Gastrocnemius medialis (tissue), 4 donors: ENCODE measurements at regions of chr9 and their contacts with region 1.

Region 1: GRCh38 chr9:134163353-134164196 is 789 bp downstream of the RNU6ATAC start:
- DNase-seq: peak; percentile 45 to 60
- ATAC-seq: peak in 1 of 2 donors; percentile 31
- H3K4me3 ChIP-seq: no peak overlapping the region
- H3K27ac ChIP-seq: no peak overlapping the region
- H3K4me1 ChIP-seq: peaks cover 4 to 10% of the 10 kb centered on the region in 2 donors
- H3K27me3 ChIP-seq: no peaks in the 10 kb centered on the region
- CTCF ChIP-seq: peak; percentile 39 to 63 (median 60)
- POLR2A ChIP-seq: no peak

Region 2: DNA sequence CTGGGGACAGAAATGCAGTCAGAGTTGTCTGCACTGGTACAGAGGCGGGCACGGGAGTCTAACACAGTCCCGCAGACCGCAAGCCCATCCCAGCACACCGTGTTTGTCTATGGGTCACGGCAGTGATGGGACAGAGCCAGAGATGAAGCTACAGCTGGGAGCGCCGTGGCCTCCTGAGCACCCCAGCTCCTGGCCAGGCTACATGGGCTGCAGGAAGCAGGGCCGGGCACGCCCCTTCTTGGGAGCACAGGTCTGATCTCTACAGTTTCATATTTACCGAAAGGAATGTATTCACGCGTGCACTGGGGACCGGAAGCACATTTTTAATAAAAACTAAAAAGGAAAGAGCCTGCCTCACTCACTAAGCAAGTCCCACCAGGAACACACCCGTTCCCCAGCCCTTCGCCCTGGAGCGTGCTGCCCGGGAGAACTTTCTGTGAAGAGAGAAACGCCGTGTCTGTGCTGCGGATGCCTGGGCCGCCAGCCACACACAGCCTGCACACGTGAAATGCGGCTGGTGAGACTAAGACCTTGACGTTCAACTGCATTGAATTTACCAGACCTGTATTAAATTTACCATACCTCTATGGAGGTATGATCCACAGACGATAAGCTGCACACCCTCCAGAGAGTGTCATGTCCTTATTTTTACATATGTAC is 252.6 kb before region 1 on chr9:
- in situ Hi-C with region 1: no loop called
- intact Hi-C with region 1: no loop called
- DNase-seq: no peak
- ATAC-seq: no peak
- H3K4me3 ChIP-seq: no peak overlapping the region
- H3K27ac ChIP-seq: no peak overlapping the region
- H3K4me1 ChIP-seq: no peaks in the 10 kb centered on the region
- H3K27me3 ChIP-seq: peaks cover 0 to 6% (median 1%) of the 10 kb centered on the region in 3 donors
- CTCF ChIP-seq: no peak
- POLR2A ChIP-seq: no peak

Region 3: DNA sequence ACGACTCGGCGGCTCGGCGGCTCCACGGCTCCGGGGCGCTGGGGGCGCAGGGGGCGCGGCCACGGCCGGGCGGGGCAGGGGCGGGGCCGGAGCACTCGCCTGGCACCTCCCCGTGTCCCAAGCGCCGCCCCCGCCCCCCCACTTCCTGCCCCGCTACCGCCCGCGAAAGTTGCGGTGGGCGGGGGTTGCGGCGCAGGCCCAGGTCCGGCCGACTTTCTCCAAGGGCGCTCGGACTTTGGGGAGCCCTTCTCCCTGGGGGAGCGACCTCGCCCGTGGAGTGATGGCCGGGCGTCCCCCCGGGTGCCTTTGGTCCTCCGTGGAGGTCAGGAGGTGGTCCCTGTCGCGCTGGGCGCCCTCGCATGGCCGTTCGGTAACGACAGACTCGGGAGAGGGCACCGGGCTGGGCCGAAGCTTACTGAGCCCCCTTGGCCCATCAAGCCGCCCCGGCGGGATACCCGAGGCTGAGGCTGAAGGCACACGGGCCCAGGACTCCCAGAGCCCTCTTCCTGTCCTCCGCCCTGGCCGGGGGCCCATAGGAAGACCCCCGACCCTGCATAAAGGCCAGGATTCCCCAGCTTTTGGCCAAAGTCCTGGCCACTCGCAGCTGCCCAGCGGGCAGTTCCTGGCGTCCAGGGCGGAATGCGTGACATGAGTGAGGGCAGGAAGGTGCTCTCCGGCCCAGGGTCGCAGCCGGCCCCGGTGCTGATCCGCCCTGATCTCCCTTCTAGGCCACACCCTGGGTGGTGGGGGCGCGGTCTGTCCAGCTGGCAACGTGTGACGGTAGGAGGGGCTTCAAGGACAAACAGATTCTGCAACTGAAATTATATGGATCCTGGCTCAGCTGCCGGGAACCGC is 170.6 kb before region 1 on chr9:
- in situ Hi-C with region 1: no loop called
- intact Hi-C with region 1: no loop called
- DNase-seq: peak; percentile 47 to 63
- ATAC-seq: peak; percentile 53 to 57
- H3K4me3 ChIP-seq: peak overlapping the region; percentile 64 to 80 (median 72)
- H3K27ac ChIP-seq: peak overlapping the region; percentile 74 to 83 (median 77)
- H3K4me1 ChIP-seq: peaks cover 9 to 20% of the 10 kb centered on the region in 2 donors
- H3K27me3 ChIP-seq: peaks cover 11 to 33% (median 33%) of the 10 kb centered on the region in 3 donors
- CTCF ChIP-seq: peak in 1 of 5 experiments; percentile 21
- POLR2A ChIP-seq: peak; percentile 14 to 15

Region 4: DNA sequence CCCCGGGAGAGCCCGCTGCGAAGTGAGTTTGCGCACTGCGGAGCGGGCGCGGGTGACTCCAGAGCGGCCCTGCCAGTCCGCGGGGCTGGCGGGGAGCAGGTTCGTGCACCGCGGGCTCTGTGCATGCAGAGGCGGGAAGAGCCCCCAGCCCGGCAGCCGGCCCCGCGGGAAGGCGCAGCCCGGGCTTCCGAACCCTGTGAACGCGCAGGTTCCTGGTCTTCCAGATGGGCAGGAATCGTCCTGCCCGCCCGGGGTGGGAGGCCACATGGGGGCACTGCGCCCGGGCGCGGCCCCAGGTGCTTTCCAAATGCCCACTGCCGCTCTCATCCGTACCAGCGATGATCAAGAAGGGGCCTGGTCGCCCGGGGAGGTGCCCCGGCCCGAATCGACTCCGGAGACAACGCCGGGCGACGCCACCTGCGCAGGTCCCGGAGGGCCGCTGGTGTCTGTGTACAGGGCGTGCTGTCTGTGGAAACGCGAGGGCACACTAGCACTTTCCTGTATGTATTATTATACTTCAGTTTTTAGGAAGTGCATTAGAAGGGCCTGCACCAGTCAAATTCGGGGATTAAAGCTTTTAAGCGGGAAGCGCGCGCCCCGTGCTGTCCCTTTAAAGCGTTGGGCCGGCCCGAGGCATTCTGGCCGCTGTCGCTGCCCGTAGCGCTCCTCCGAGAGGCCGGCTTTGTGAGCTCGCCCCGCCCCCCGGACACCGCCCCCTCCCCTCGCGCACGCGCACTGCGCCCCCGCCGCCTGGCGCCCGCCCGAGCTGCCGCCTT is 28.0 kb before region 1 on chr9 and contains the start of gene WDR5:
- in situ Hi-C with region 1: no loop called
- intact Hi-C with region 1: loop called (anchors 1 kb)
- DNase-seq: peak; percentile 85 to 90
- ATAC-seq: peak; percentile 91 to 92
- H3K4me3 ChIP-seq: peak within 1 kb of the TSS; percentile 78 to 99 (median 89)
- H3K27ac ChIP-seq: peak within 1 kb of the TSS; percentile 86 to 97 (median 94)
- H3K4me1 ChIP-seq: peaks cover 37 to 58% of the 10 kb centered on the region in 2 donors
- H3K27me3 ChIP-seq: no peaks in the 10 kb centered on the region
- CTCF ChIP-seq: peak in 3 of 5 experiments; percentile 15 to 27 (median 26)
- POLR2A ChIP-seq: peak in 1 of 2 donors; percentile 51
- total RNA-seq, gene WDR5: 19.8 to 39.3 (median 31.9) TPM

Region 5: GRCh38 chr9:134185536-134186011 is 22.0 kb after region 1 on chr9:
- in situ Hi-C with region 1: no loop called
- intact Hi-C with region 1: no loop called
- DNase-seq: no peak
- ATAC-seq: no peak
- H3K4me3 ChIP-seq: no peak overlapping the region
- H3K27ac ChIP-seq: no peak overlapping the region
- H3K4me1 ChIP-seq: peaks cover 24 to 25% of the 10 kb centered on the region in 2 donors
- H3K27me3 ChIP-seq: no peaks in the 10 kb centered on the region
- CTCF ChIP-seq: no peak
- POLR2A ChIP-seq: no peak

Region 6: DNA sequence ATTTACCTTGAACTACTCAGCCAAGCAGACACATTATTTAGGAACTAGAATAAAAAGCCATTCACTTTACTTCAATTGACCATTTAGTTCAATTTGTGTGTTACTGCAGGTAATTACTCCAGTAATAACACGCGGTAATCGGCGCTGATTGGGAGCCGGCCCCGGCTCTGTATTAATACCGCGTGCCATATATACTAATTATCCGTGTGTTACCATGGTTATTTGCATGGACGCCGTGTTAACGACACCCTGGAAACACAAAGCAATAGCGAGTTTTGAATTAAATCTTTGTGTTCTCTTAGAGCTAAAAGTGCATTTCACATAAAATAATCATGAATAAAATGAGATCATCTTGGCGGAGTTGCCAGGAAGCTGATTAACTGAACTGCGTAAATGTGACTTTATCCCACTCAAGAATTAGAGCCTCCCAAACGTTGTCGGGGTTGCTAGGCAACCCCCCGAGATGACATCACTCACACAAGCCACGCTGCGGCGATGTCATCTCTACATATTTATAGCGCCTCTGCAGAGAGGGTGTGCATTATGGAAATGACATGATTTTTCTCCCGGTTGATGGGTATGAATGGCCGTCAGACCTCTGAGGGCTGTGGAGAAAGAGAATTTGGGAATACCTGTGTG is 42.2 kb after region 1 on chr9:
- in situ Hi-C with region 1: no loop called
- intact Hi-C with region 1: loop called (anchors 1 kb)
- DNase-seq: peak; percentile 15 to 37
- ATAC-seq: no peak
- H3K4me3 ChIP-seq: no peak overlapping the region
- H3K27ac ChIP-seq: peak overlapping the region in 3 of 4 donors; percentile 1 to 25 (median 15)
- H3K4me1 ChIP-seq: peaks cover 30 to 34% of the 10 kb centered on the region in 2 donors
- H3K27me3 ChIP-seq: no peaks in the 10 kb centered on the region
- CTCF ChIP-seq: no peak
- POLR2A ChIP-seq: no peak

Region 7: GRCh38 chr9:134449221-134449894 is 285.8 kb after region 1 on chr9:
- in situ Hi-C with region 1: loop called (anchors 5 to 10 kb)
- intact Hi-C with region 1: no loop called
- DNase-seq: peak; percentile 83 to 87
- ATAC-seq: peak; percentile 84 to 85
- H3K4me3 ChIP-seq: no peak overlapping the region
- H3K27ac ChIP-seq: no peak overlapping the region
- H3K4me1 ChIP-seq: no peaks in the 10 kb centered on the region
- H3K27me3 ChIP-seq: no peaks in the 10 kb centered on the region
- CTCF ChIP-seq: peak; percentile 60 to 87 (median 84)
- POLR2A ChIP-seq: no peak

Region 8: GRCh38 chr9:134492281-134492691 is 328.7 kb after region 1 on chr9:
- in situ Hi-C with region 1: no loop called
- intact Hi-C with region 1: no loop called
- DNase-seq: no peak
- ATAC-seq: peak in 1 of 2 donors; percentile 56
- H3K4me3 ChIP-seq: no peak overlapping the region
- H3K27ac ChIP-seq: no peak overlapping the region
- H3K4me1 ChIP-seq: no peaks in the 10 kb centered on the region
- H3K27me3 ChIP-seq: peaks cover 3 to 11% (median 7%) of the 10 kb centered on the region in 3 donors
- CTCF ChIP-seq: no peak
- POLR2A ChIP-seq: no peak